WTC11 (cell line): ENCODE measurements at regions of chr10 and their contacts with region 1.

Region 1: GRCh38 chr10:87861953-87862678 is 1.2 kb downstream of the KLLN start:
- DNase-seq: peak; percentile 98
- ATAC-seq: peak; percentile 70
- H3K4me3 Mint-ChIP-seq: peak overlapping the region; percentile 98
- H3K27ac Mint-ChIP-seq: peak overlapping the region; percentile 99
- H3K4me1 Mint-ChIP-seq: peaks cover 32% of the 10 kb centered on the region
- H3K27me3 Mint-ChIP-seq: peaks cover 4% of the 10 kb centered on the region
- CTCF ChIP-seq: no peak

Region 2: GRCh38 chr10:87817609-87818504 is 44.3 kb before region 1 on chr10 and contains the start of gene ATAD1:
- CTCF ChIA-PET with region 1: interaction called, 4 read pairs
- POLR2A ChIA-PET with region 1: interaction called, 22 read pairs
- DNase-seq: peak; percentile 80
- ATAC-seq: peak; percentile 92
- H3K4me3 Mint-ChIP-seq: peak within 1 kb of the TSS; percentile 95
- H3K27ac Mint-ChIP-seq: peak within 1 kb of the TSS; percentile 96
- H3K4me1 Mint-ChIP-seq: peaks cover 26% of the 10 kb centered on the region
- H3K27me3 Mint-ChIP-seq: peaks cover 5% of the 10 kb centered on the region; the same call in 1 of the 2 replicates
- CTCF ChIP-seq: no peak
- total RNA-seq, gene ATAD1: 43.7 to 46.7 TPM (median 45.5 TPM) in 3 replicates

Region 3: DNA sequence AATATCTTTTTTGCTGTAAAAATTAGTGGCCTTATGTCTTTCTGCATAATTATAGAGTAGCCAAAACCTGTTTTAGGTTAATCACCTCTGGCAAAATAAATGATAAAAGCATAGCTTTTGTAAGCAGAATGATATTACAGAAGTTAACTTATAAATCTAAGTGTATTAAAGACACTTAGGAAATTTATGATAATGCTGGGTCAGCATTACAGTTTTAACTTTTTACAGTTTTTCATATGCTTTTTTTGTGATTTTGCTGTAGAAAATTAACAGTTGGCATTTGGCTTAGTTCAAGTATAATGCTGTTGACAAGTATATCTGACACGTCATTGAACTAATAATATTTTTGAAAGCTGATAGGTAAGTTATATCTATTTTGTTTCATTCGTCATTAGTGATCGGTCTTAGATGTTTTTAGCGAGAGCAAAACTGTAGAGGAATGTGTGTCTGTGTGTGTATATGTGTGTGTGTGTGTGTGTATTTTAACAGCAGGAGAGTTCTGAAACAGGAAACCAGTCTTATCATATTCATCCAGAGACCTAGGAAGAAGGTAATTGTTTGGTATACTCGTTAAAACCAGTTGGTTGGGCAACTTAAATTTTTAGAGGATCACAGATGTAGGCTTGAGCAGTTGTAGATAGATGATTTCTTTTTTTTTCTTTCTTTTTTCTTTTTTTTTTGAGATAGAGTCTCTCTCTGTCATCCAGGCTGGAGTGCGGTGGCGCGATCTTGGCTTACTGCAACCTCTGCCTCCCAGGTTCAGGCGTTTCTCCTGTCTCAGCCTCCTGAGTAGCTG is 16.7 kb after region 1 on chr10:
- CTCF ChIA-PET with region 1: no interaction called
- POLR2A ChIA-PET with region 1: no interaction called
- DNase-seq: no peak
- ATAC-seq: no peak
- H3K4me3 Mint-ChIP-seq: no peak overlapping the region
- H3K27ac Mint-ChIP-seq: peak overlapping the region; percentile 14
- H3K4me1 Mint-ChIP-seq: peaks cover 20% of the 10 kb centered on the region
- H3K27me3 Mint-ChIP-seq: no peaks in the 10 kb centered on the region; the same call in 1 of the 2 replicates
- CTCF ChIP-seq: no peak

Region 4: GRCh38 chr10:88114368-88114767 is 252.3 kb after region 1 on chr10:
- CTCF ChIA-PET with region 1: interaction called, 19 read pairs
- POLR2A ChIA-PET with region 1: interaction called, 24 read pairs
- DNase-seq: peak; percentile 41
- ATAC-seq: peak; percentile 92
- H3K4me3 Mint-ChIP-seq: no peak overlapping the region
- H3K27ac Mint-ChIP-seq: no peak overlapping the region
- H3K4me1 Mint-ChIP-seq: peaks cover 15% of the 10 kb centered on the region
- H3K27me3 Mint-ChIP-seq: no peaks in the 10 kb centered on the region
- CTCF ChIP-seq: no peak; the same call in 1 of the 2 replicates

Region 5: GRCh38 chr10:88386821-88387773 is 525.0 kb after region 1 on chr10:
- CTCF ChIA-PET with region 1: interaction called, 10 read pairs
- POLR2A ChIA-PET with region 1: interaction called, 16 read pairs
- DNase-seq: no peak
- ATAC-seq: peak; percentile 90
- H3K4me3 Mint-ChIP-seq: no peak overlapping the region
- H3K27ac Mint-ChIP-seq: no peak overlapping the region
- H3K4me1 Mint-ChIP-seq: peaks cover 6% of the 10 kb centered on the region
- H3K27me3 Mint-ChIP-seq: no peaks in the 10 kb centered on the region
- CTCF ChIP-seq: no peak